Calu3 (cell line): ENCODE measurements at regions of chr1 and their contacts with region 1.

Region 1: GRCh38 chr1:31483012-31483946 is 70.3 kb downstream of the SERINC2 start:
- DNase-seq: peak; percentile 71
- H3K4me3 Mint-ChIP-seq: peak overlapping the region; percentile 55
- H3K27ac Mint-ChIP-seq: peak overlapping the region; percentile 88
- H3K4me1 Mint-ChIP-seq: peaks cover 31% of the 10 kb centered on the region
- H3K27me3 Mint-ChIP-seq: no peaks in the 10 kb centered on the region
- CTCF ChIP-seq: no peak

Region 2: DNA sequence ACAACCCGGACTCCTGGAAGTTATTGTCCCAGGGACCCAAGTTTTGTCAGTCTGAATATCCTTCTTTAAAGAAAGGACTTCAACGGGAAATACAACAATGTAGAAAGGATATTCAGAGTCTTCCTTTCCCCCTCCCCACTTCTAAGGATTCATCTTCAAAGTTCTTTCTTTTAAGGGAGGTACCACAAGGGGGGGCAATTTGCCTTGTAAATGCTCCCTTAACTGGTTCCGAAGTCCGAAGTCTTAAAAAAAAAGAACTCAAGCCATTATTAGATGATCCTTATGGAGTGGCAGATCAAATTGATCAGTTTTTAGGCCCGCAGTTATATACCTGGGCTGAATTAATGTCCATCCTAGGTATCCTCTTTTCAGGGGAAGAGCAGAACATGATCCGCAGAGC is 23.3 kb before region 1 on chr1:
- CTCF ChIA-PET with region 1: no interaction called
- intact Hi-C with region 1: no loop called
- DNase-seq: no peak
- H3K4me3 Mint-ChIP-seq: no peak overlapping the region
- H3K27ac Mint-ChIP-seq: no peak overlapping the region
- H3K4me1 Mint-ChIP-seq: no peaks in the 10 kb centered on the region
- H3K27me3 Mint-ChIP-seq: peaks cover 16% of the 10 kb centered on the region
- CTCF ChIP-seq: no peak

Region 3: GRCh38 chr1:31470794-31471340 is 12.4 kb before region 1 on chr1:
- CTCF ChIA-PET with region 1: no interaction called
- intact Hi-C with region 1: no loop called
- DNase-seq: no peak
- H3K4me3 Mint-ChIP-seq: peak overlapping the region; percentile 12
- H3K27ac Mint-ChIP-seq: peak overlapping the region; percentile 96
- H3K4me1 Mint-ChIP-seq: peaks cover 34% of the 10 kb centered on the region
- H3K27me3 Mint-ChIP-seq: no peaks in the 10 kb centered on the region
- CTCF ChIP-seq: no peak

Region 4: GRCh38 chr1:31510841-31511803 is 27.8 kb after region 1 on chr1:
- CTCF ChIA-PET with region 1: no interaction called
- intact Hi-C with region 1: loop called (anchors 1 kb)
- DNase-seq: peak; percentile 40
- H3K4me3 Mint-ChIP-seq: peak overlapping the region; percentile 12
- H3K27ac Mint-ChIP-seq: peak overlapping the region; percentile 7
- H3K4me1 Mint-ChIP-seq: peaks cover 42% of the 10 kb centered on the region
- H3K27me3 Mint-ChIP-seq: no peaks in the 10 kb centered on the region
- CTCF ChIP-seq: no peak